Endothelial cell of umbilical vein (primary cell): ENCODE measurements at regions of chr12 and their contacts with region 1.

Region 1: DNA sequence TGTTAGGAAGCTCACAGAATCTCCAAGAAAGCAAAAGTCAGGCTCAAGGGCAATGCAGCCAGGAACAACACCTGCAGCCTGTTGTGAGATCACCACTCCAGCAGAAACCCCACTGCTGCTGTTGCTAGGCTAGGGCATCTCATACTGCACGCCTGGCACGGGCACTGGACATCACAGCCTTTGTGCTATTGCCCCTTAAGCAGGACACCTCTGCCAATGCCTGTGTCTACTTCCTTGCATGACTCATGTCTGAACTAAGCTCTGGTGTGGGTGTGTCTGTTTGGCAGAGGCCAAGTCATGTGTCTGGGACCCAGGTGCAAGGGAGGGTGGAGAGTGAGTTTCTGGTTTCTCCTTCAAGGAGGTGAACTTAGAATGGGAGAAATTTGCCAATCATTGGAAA is 10.0 kb upstream of the DDX47 start:
- DNase-seq: peak; percentile 89
- H3K4me3 ChIP-seq: no peak overlapping the region
- H3K27ac ChIP-seq: peak overlapping the region; percentile 95
- H3K4me1 ChIP-seq: peaks cover 36% of the 10 kb centered on the region
- H3K27me3 ChIP-seq: no peaks in the 10 kb centered on the region
- CTCF ChIP-seq: no peak
- POLR2A ChIP-seq: no peak

Region 2: DNA sequence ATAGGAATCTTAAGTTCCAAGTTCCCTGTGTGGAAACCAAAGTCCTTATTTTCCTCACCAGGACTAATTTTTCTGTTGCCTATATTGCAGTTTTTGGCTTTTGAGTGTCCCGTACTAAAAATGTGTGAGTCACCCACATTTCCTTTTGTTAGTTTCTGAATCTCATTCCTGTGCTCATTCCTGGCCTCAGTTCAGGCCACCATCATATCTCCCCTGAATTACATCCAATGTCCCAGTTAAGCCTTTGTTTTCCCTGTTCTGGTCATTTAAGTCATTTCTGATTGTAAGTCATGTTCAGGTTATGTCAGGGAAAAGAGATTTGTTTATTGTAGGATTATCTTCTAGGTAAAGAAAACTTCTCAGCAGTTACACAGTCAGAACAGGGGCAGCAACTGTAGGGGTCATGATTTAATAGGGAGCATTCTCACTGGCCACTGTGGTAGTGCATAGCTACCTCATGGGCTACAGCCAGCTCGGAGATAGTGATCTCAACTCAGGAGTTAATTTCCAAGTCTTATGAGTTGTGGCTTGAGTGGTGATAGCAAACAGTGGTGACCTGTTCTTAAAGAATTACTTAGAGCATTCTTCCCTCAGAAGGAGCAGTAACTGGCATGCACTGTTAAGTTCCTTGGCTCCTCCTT is 16.6 kb after region 1 on chr12:
- CTCF ChIA-PET with region 1: interaction called, 7 read pairs
- POLR2A ChIA-PET with region 1: no interaction called
- dilution Hi-C with region 1: no loop called
- intact Hi-C with region 1: loop called (anchors 1 kb)
- DNase-seq: peak; percentile 85
- H3K4me3 ChIP-seq: peak overlapping the region in 1 of 3 experiments; percentile 15
- H3K27ac ChIP-seq: peak overlapping the region; percentile 93
- H3K4me1 ChIP-seq: peaks cover 49% of the 10 kb centered on the region
- H3K27me3 ChIP-seq: no peaks in the 10 kb centered on the region
- CTCF ChIP-seq: no peak
- POLR2A ChIP-seq: no peak